Head of caudate nucleus (tissue), 42 donors: ENCODE measurements at regions of chr11 and their contacts with region 1.

Region 1: GRCh38 chr11:120172054-120172911 is 34.4 kb upstream of the TRIM29 start:
- DNase-seq: peak; percentile 61 to 91 (median 78)

Region 2: DNA sequence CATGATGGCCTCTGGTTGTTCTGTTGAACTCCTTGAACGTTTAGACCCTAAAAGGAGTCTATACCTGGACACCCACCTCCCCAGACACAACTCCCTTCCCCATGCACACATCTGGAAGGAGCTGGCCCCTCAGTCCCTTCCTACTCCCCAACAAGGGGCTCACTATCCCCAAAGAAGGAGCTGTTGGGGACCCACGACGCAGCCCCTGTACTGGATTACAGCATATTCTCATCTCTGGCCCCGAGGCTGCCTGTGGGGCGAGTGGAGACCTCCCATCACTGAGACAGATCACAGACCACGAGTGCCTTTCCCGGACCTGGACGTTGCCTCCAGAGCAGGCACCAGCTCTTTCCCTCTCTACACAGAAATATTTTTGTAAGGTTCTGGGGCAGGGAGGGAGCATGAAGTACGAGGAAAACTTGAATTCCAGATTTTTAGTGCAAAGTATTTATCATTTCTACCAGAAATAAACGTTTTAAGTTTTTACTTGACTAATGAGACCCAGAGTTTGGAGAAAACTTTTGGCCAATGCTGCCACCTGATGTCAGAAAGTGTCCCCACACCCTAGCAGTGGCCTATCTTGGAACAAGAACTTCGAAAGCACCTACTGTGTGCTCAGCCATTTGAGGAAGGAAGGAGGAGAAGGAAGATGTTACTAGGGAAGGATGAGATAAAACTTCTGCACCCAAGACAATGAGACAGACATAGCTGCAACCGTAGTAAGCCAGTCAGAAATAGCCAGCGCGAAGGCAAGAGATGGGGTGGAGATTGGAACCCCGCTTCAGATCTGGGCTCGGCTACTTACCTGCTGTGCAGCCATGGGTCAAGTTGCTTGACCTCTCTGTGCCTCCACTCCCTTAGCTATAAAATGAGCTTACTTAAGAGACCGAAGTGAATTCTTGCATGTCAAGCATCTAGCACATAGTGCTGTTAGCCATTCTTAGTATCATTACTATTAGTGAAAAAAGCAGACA is 57.5 kb after region 1 on chr11:
- intact Hi-C with region 1: loop called (anchors 2 kb)
- DNase-seq: peak in 29 of 42 donors; percentile 36 to 78 (median 57)

Region 3: GRCh38 chr11:120261931-120262330 is 89.6 kb after region 1 on chr11:
- intact Hi-C with region 1: no loop called
- DNase-seq: no peak